ENCODE measurements at regions of chr14 and their contacts with region 1.

Region 1: DNA sequence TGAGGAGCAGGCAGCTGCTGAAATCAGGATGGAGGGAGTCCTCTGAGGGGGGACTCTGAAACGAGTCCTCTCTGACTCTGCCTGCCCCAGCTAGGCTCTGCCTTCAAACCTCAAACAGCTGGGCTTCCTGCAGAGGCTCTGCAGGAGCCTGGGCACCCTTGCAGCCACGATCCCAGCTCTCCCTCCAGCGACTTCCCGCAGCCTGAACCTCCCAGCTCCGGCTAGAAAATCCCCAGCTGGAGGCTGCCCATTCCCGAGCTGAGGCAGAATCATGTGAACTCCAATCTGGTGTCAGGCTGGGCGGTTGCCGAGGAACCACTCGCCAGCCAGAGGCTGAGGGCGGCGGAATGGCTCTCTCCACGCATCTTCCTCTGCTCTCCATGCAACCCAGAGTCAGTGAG is at the start of gene GPR68:
- DNase-seq: peak in 2 of 9 donors; percentile 25 to 39
- ATAC-seq: no peak
- H3K4me3 ChIP-seq: peak within 1 kb of the TSS; percentile 59
- H3K4me3 Mint-ChIP-seq: peak within 1 kb of the TSS; percentile 72 to 91 (median 82)
- H3K27ac ChIP-seq: peak within 1 kb of the TSS; percentile 89
- H3K27ac Mint-ChIP-seq: peak within 1 kb of the TSS; percentile 79 to 100 (median 98)
- H3K4me1 ChIP-seq: peaks cover 51 to 63% of the 10 kb centered on the region in 2 donors
- H3K4me1 Mint-ChIP-seq: peaks cover 56 to 96% (median 89%) of the 10 kb centered on the region in 7 donors
- H3K27me3 ChIP-seq: no peaks in the 10 kb centered on the region
- H3K27me3 Mint-ChIP-seq: no peaks in the 10 kb centered on the region
- total RNA-seq, gene GPR68: 0.86 to 38.6 (median 2.3) TPM

Region 2: DNA sequence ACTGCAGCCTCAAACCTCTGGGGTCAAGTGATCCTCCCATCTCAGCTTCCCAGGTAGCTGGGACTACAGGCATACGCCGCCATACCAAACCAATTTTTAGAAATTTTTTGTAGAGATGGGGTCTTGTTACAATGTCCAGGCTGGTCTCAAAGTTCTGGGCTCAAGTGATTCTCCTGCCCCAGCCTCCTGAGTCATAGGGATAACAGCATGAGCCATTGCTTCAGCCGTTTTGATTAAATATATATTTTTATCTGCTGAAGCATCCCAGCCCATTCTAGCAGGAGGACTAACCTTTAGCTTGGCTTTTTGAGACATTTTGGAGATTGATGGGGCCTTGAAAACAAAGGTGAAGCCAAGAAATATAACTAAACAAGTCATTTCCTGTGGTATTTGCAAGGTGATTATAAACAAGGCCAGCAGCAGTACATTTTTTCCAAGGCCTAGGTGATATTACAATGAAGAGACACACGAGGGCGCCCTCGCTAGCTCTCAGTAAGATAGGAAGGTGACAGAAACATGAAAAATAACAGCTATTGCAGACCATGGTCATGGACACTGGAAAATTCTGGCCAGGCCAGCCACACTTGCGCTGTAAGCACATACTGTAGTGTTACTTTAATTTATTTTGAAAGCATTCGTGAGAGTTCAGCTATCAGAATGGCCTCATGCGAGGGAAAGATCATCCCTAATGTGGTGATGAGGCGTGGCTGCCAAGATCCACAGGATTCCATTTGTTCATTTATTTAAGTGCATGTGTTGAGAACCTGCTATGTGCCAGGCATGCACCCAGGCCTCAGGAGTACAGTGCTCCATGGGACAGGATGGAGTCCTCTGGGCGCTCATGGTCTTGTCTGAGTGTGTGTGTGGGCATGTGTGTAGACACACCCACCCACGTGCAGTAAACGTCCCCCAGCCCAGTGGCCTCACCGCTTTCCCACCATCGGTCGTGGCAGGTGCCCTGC is 67.1 kb before region 1 on chr14:
- CTCF ChIA-PET with region 1: interaction called, 7 read pairs
- POLR2A ChIA-PET with region 1: interaction called, 3 read pairs
- intact Hi-C with region 1: loop called (anchors 1 kb)
- DNase-seq: peak; percentile 30 to 80 (median 68)
- ATAC-seq: peak; percentile 91
- H3K4me3 ChIP-seq: no peak overlapping the region
- H3K4me3 Mint-ChIP-seq: peak overlapping the region in 1 of 10 donors; percentile 8
- H3K27ac ChIP-seq: peak overlapping the region; percentile 44
- H3K27ac Mint-ChIP-seq: peak overlapping the region in 8 of 9 donors; percentile 12 to 85 (median 68)
- H3K4me1 ChIP-seq: peaks cover 0 to 8% of the 10 kb centered on the region in 2 donors
- H3K4me1 Mint-ChIP-seq: peaks cover 6 to 29% (median 13%) of the 10 kb centered on the region in 7 donors
- H3K27me3 ChIP-seq: no peaks in the 10 kb centered on the region
- H3K27me3 Mint-ChIP-seq: no peaks in the 10 kb centered on the region

Region 3: DNA sequence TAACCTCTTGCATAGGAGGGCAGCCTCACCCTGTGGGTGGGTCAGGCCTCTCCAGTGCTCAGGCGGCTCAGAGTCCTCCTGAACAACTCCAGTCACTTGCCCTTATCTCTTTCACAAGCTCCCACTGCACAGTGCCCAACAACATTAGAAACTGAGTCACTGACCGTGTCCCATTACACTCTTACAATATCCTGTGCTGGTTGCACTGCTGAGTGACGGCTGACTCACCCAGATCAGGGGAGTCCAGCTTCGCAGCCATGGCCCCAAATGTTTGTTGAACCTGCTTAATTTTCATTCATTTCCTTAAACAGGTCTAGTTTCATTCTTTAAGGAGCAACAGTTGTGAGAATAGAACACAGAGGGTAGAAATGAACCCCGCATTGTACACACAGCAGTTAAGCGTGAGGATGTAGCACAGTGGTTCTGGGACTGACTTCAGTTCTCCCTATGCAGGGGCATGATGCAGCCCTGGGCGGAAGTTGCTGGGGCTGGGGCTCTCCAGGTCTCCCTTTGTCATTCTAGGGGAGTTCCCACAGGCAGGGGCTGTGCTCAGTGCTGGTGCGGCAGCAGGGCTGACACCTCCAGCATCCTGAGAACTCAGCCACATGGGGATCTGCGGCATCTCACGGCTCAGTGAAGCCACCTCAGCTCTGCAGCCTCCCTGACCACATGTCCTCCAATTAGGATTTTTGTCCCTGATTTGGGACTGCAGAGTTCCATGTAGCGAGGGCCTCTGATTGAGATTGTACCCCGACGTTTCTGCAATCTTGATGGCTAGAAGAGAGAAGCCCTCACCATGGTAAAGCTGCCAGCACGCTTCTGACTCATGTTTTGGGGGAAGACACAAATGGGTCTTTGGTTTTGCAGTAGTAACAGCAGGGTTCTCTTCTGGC is 16.1 kb before region 1 on chr14:
- CTCF ChIA-PET with region 1: interaction called, 4 read pairs
- POLR2A ChIA-PET with region 1: interaction called, 103 read pairs
- intact Hi-C with region 1: loop called (anchors 1 kb)
- DNase-seq: peak; percentile 42 to 86 (median 60)
- ATAC-seq: peak; percentile 89
- H3K4me3 ChIP-seq: peak overlapping the region; percentile 34
- H3K4me3 Mint-ChIP-seq: peak overlapping the region; percentile 48 to 87 (median 73)
- H3K27ac ChIP-seq: peak overlapping the region; percentile 57
- H3K27ac Mint-ChIP-seq: peak overlapping the region; percentile 9 to 98 (median 88)
- H3K4me1 ChIP-seq: peaks cover 89 to 92% of the 10 kb centered on the region in 2 donors
- H3K4me1 Mint-ChIP-seq: peaks cover 69 to 99% (median 93%) of the 10 kb centered on the region in 7 donors
- H3K27me3 ChIP-seq: no peaks in the 10 kb centered on the region
- H3K27me3 Mint-ChIP-seq: no peaks in the 10 kb centered on the region

Region 4: DNA sequence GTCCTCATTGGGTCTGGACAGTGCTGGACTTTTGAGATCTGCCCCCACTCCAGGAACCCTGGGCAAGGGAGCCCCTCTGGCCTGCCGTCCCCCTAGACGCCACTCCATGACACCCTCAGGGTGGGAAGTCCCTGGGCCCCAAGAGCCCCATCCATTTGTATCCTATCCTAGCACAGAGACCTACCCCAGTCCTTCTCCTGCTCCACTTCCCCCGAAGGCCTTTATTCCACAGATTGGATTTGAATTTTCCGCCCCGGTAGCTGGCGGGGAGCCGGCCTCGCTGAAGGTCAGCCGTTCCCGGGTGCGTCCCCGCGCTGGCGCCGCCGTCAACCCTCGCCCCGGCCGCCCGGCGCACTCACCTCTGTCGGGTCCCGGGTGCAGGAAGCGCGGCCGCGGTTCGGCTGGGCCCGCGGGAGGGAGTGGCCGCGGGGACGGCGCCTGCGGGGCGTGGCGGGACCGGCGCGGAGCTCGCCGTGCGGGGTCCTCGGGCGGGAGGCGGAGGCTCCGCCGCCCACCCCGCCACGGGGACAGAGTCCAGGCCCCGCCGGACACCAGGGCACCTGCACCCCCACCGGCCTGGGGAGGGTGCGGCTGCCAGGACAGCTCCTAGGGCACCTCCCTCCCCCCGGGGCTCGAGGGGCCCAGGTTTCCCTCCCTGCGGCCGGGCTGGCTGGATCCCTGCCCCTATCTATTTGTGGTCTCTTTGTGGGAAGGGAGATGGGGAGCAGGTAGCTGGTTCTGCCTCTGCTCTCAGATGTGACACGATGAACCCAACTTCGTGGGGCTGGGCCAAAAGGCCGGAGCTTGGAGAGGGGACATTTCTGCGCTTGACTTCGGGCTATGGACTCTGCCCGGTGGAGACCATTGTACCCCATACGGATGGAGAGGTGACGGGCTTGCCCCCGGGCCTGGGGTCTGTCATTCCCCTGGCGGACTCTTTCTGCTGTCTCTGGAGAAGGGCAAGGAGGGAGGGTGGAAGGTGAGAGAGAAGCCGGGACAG is 19.9 kb after region 1 on chr14:
- CTCF ChIA-PET with region 1: interaction called, 6 read pairs
- POLR2A ChIA-PET with region 1: interaction called, 11 read pairs
- intact Hi-C with region 1: loop called (anchors 1 to 2 kb)
- DNase-seq: peak in 1 of 9 donors; percentile 23
- ATAC-seq: peak; percentile 58
- H3K4me3 ChIP-seq: no peak overlapping the region
- H3K4me3 Mint-ChIP-seq: peak overlapping the region; percentile 61 to 80 (median 74)
- H3K27ac ChIP-seq: no peak overlapping the region
- H3K27ac Mint-ChIP-seq: peak overlapping the region in 8 of 9 donors; percentile 56 to 89 (median 72)
- H3K4me1 ChIP-seq: peaks cover 5 to 12% of the 10 kb centered on the region in 2 donors
- H3K4me1 Mint-ChIP-seq: peaks cover 28 to 73% (median 43%) of the 10 kb centered on the region in 7 donors
- H3K27me3 ChIP-seq: no peaks in the 10 kb centered on the region
- H3K27me3 Mint-ChIP-seq: peaks cover 0 to 13% (median 0%) of the 10 kb centered on the region in 5 donors

Region 5: DNA sequence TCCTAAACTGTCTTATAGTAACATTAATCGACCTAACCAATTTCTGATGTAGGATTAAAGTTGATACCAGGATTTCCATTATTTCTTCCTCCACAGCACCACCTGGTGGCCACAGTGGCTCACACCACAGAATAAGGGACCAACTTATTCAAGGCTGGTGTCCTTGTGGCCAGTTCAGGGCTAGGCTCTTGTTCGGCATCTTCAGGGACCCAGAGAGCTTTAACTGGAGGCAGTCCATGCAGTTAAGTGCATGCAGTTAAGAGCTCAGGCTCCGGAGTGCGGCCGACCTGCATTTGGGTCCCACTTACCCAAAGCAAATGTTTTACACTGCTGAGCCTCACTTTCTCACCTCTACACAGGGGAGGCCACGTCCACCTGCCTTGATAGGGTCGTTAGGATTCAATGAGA is 42.0 kb after region 1 on chr14:
- CTCF ChIA-PET with region 1: interaction called, 3 read pairs
- POLR2A ChIA-PET with region 1: interaction called, 5 read pairs
- intact Hi-C with region 1: loop called in 1 of 2 experiments (anchors 1 kb)
- DNase-seq: peak; percentile 55 to 77 (median 69)
- ATAC-seq: peak; percentile 89
- H3K4me3 ChIP-seq: no peak overlapping the region
- H3K4me3 Mint-ChIP-seq: peak overlapping the region in 1 of 10 donors; percentile 35
- H3K27ac ChIP-seq: no peak overlapping the region
- H3K27ac Mint-ChIP-seq: peak overlapping the region; percentile 2 to 86 (median 63)
- H3K4me1 ChIP-seq: no peaks in the 10 kb centered on the region
- H3K4me1 Mint-ChIP-seq: peaks cover 11 to 25% (median 17%) of the 10 kb centered on the region in 7 donors
- H3K27me3 ChIP-seq: no peaks in the 10 kb centered on the region
- H3K27me3 Mint-ChIP-seq: no peaks in the 10 kb centered on the region

Measured in naive thymus-derived CD4-positive, alpha-beta T cell (primary cell).